ENCODE measurements at regions of chr7 and their contacts with region 1.

Region 1: DNA sequence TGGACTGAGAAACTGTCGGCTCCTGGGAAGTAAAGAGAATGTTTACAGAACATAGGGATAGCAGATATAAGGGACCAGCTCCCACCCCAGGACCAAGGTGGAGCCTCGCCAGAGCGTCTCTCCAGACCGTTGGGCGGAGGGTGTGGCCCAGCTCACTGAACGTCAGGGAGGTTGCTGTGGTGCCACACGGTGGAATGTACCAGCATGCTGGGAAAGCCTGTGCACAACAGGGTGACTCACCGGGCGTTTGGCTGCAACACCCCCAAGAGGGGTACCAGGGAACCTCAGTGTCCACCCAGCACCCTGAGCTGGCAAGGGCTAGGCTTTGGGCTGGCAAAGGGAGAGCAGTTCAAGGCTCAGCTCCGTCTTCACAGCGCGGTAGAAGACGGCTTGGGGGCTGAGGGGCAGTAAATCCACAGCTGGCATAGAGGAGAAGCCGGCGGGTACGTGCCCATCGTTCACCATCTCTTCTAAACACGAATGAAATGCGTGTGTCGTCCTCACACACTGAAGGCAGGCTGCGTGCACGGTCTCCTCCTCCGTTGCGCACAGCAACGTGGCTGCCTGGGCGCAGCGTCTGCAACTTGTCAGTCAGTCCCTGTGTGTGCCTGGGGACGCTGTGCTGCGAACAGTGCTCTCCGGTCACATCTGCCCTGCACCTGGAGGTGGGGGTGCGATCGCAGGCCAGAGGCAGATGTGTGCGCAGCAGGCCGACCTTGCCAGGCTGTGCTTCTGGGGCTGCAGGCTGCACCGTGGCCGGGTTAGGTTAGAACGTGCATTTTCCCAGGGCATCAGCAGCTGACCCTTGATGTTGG is 8.5 kb upstream of the GET4 start:
- DNase-seq: peak; percentile 67 to 85
- ATAC-seq: peak; percentile 77 to 92 (median 90)
- H3K4me3 ChIP-seq: no peak overlapping the region
- H3K27ac ChIP-seq: peak overlapping the region; percentile 74
- H3K4me1 ChIP-seq: peaks cover 15% of the 10 kb centered on the region
- H3K27me3 ChIP-seq: no peaks in the 10 kb centered on the region
- CTCF ChIP-seq: no peak

Region 2: DNA sequence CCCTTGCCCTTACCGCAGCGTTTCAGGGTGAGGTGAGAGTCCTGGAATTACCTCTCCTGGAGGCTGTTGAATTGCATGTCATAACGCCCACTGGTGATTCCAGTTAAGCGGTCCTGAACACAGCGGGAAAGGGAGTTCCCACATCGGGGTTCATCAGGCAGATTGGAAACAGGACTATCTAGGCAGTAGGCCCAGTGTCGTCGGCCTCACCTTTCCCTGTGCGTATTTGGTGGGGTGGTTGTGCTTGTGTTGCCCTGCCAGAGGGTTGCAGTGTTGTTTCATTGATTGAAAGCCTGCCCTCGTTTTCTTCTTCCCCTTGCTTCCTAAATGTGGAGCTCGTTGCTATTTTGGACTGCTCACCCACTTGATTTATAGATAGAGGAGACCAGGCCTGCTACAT is 46.2 kb before region 1 on chr7:
- intact Hi-C with region 1: loop called (anchors 2 to 5 kb)
- DNase-seq: no peak
- ATAC-seq: peak; percentile 61 to 81 (median 70)
- H3K4me3 ChIP-seq: no peak overlapping the region
- H3K27ac ChIP-seq: peak overlapping the region; percentile 96
- H3K4me1 ChIP-seq: peaks cover 81% of the 10 kb centered on the region
- H3K27me3 ChIP-seq: no peaks in the 10 kb centered on the region
- CTCF ChIP-seq: peak; percentile 32

Region 3: DNA sequence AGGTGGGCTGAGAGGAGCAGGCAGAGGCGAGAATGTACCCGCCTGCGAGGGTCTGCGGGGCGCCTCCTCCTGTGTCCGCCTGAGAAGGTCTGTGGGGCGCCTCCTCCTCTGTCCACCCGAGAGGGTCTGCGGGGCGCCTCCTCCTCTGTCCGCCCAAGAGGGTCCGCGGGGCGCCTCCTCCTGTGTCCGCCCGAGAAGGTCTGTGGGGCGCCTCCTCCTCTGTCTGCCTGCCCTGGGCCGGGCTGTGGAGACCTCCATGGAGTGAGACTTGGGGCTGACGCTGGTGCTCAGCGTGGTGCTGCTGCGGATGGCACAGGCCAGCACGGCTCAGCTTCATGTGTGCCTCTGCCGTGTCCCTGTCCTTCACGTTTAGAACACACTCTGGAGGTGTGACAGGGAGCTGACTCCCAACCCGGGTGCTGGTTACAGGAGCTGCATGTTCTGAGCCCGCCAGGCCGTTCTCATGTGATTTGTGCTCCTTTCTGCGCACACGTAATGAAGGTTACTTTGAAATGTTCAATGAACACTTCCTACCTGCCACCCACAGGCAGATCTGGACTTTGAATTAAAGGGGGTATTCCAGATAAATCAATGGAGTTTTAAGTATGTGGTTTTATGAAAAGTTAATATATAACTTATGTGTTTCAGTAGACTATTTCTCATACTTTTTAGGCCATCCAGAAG is 12.1 kb before region 1 on chr7:
- intact Hi-C with region 1: no loop called
- DNase-seq: no peak
- ATAC-seq: no peak
- H3K4me3 ChIP-seq: no peak overlapping the region
- H3K27ac ChIP-seq: no peak overlapping the region
- H3K4me1 ChIP-seq: peaks cover 4% of the 10 kb centered on the region
- H3K27me3 ChIP-seq: no peaks in the 10 kb centered on the region
- CTCF ChIP-seq: no peak

Region 4: DNA sequence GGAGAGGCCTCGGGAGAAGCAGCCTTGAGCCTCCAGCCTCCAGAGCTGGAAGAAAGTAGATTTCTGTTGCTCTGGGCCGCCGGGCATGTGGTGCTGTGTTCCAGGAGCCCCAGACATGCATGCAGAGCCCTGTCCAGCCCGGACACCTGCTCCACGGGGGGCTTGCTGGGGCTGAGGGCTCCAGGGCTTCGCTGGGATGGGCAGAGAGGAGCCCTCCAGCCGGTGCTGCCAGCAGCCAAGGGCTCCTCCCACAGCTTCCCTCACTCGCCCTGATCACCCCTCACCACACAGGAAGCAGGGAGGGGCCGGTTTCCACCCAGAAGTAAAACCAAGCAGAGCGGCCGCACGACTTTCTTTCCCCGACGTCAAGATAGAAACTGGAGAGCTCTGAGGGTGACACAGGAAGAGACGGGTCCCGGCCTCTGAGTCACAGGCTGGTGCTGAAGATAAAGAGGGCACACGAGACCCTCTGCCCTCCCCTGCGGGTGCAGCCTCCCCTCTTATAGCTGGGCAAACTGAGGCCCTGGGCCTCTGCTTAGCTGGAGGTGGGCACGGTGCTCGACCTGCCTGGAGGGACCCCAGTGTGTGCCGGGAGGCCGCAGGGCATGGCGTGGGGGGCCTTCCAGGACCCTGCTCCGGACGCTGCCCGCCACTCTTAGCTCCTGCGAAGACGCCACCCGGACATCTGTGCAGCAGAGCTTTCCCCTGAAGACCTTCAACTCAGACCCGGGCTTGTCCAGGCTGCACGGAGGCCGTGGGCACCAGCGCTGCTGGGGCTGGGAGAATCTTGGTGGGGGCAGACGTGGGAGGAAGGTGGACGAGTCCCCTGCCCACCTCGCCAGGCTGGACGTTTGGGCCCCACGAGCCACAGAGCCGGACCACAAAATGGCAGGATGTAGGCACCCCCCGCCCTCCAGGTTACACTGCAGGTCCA is 55.5 kb after region 1 on chr7:
- intact Hi-C with region 1: no loop called
- DNase-seq: peak; percentile 65 to 78
- ATAC-seq: peak; percentile 23 to 59 (median 34)
- H3K4me3 ChIP-seq: peak overlapping the region; percentile 11
- H3K27ac ChIP-seq: no peak overlapping the region
- H3K4me1 ChIP-seq: no peaks in the 10 kb centered on the region
- H3K27me3 ChIP-seq: peaks cover 0 to 14% (median 2%) of the 10 kb centered on the region in 3 donors
- CTCF ChIP-seq: no peak